Astrocyte of the cerebellum (primary cell): ENCODE measurements at regions of chr6 and their contacts with region 1.

Region 1: DNA sequence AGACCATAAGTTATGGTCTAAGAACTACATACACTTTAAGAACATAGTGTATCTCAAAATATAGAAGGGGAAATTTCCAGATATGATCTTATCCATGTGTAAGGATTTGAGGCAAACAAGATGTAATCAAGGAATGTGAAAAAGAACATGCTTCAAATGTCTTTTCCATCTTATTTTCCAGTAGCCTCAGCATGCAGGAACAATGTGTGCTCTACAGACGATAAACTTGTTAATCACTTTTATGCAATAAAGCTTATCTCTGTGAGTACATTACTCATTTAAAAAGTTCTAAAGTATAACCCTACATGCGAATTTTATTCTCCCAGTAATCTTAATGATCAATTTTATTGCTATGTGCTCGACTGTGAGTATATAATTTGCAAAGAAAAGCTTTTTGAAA is 185.2 kb downstream of the ALDH8A1 start:
- DNase-seq: no peak
- H3K4me3 ChIP-seq: no peak overlapping the region
- CTCF ChIP-seq: no peak

Region 2: DNA sequence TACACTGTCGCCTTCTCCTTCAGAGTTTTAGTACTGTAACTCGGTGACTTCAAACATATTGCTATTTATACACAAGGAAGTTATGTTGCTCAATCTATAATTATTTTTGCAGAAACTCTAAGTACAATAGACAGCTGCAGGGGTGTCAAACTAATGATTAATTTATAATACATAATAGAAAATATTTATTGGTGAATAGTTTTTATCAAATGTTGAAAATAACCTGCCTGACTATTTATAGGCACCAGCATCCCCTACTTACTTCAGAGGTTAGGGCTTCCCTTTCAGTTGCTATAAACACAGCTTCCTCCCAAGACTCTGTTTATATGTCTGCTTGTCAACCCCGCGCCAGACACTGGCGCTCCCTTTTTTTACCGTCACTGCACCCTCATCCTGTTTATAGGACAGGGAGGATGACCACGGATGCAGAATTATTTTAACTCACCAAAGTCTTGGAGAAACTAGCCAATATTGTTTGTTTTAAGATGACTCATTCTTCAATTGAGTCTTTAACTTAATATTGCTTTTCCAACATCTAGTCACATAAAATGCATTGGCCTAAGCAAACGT is 39.9 kb before region 1 on chr6:
- in situ Hi-C with region 1: loop called (anchors 5 kb)
- DNase-seq: no peak
- H3K4me3 ChIP-seq: no peak overlapping the region
- CTCF ChIP-seq: no peak